ENCODE measurements at regions of chr12 and their contacts with region 1.

Region 1: DNA sequence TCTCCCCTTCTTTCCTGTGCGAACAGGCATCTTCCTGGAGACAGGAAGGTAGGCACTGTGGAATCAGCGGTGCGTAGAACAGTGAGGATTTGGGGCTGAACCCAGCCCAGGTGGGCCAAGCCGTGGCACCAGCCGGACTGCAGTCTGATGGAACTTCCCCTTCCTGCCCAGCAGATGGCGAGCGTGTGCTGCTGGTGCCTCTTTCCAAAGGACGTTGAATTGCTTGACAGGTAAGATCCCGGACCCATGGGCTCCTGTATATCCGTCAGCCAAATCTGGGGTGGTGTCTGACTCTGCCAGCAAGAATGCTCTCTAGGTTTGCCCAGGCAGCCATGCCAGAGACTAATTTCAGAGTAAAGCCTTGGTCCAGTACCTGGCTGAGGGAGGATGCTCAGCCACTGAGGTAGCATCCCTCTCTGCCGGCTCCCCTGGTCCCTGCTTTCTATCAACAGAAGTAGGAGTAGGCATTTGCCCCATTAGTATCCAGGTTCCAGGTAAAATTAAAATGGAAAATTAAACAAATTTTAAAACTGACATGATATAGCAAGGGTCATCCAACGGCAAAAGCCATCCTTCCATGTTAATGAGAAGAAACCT is 21.1 kb upstream of the KCNA5 start:
- DNase-seq: peak; percentile 84
- CTCF ChIP-seq: peak; percentile 95

Region 2: DNA sequence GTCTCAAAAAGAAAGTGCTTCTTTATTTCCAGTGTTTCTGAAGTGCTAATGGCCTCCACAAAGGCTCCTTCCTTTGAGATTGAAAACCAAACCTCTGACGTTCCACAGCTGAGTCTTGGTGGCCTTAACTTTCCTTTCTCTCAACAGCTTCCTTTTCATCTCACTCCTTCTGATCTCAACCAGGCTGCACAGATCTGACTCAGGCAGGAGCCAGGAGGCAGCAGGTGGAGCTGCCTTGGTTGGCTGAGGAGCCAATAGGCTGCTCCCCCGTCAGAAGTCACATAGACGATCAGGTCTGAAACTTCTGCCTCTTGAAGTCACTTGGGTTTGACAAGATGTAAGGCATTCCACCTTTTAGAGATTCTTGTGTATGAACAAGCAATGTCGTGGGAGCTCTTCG is 12.0 kb after region 1 on chr12:
- CTCF ChIA-PET with region 1: interaction called, 14 read pairs
- POLR2A ChIA-PET with region 1: interaction called, 6 read pairs
- DNase-seq: no peak
- CTCF ChIP-seq: no peak

Region 3: GRCh38 chr12:5059358-5059757 is 36.8 kb after region 1 on chr12:
- CTCF ChIA-PET with region 1: interaction called, 19 read pairs
- POLR2A ChIA-PET with region 1: no interaction called
- DNase-seq: peak; percentile 41
- CTCF ChIP-seq: no peak

Region 4: DNA sequence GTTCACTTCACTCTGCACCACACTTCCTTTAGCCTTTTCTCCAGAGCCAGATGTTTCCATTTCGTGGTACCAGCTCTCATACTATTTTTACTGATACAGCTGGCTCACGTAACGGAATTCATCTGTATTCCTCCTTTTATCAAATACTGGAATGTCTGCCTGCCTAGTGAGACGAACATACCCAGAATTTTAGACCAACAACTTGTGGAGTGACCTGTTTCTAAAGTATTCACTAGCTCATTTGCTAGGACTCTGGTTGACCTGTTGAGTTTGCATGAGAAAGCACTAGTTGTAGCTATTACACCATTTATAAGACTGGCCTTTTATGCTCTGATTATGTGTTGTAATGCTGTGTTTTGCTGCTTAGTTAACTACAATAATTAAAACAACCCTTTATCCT is 43.7 kb after region 1 on chr12:
- CTCF ChIA-PET with region 1: interaction called, 15 read pairs
- POLR2A ChIA-PET with region 1: no interaction called
- DNase-seq: no peak
- CTCF ChIP-seq: no peak

Region 5: DNA sequence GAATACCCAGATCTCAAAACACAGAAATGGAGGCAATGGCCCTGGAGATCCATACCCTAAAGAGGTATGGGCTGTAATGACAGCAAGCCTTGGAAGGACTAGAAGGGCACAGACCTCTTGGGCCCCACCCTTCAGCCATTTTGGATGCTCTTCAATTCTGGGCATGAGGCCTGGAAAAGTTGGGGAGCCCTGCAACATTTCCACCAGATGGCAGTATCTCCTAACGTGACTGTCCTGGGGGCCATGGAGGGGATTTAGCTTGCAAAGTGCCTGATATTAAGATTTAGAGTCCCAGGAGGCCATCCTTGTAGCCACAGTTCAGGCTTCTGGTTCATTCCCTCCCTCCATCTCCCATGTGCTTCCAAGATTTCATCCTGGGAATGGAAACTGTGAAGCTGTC is 51.3 kb after region 1 on chr12:
- CTCF ChIA-PET with region 1: interaction called, 15 read pairs
- POLR2A ChIA-PET with region 1: no interaction called
- DNase-seq: no peak
- CTCF ChIP-seq: no peak

Region 6: GRCh38 chr12:5083955-5084849 is 61.6 kb after region 1 on chr12:
- CTCF ChIA-PET with region 1: interaction called, 258 read pairs
- POLR2A ChIA-PET with region 1: no interaction called
- DNase-seq: peak; percentile 73
- CTCF ChIP-seq: peak; percentile 75

Region 7: DNA sequence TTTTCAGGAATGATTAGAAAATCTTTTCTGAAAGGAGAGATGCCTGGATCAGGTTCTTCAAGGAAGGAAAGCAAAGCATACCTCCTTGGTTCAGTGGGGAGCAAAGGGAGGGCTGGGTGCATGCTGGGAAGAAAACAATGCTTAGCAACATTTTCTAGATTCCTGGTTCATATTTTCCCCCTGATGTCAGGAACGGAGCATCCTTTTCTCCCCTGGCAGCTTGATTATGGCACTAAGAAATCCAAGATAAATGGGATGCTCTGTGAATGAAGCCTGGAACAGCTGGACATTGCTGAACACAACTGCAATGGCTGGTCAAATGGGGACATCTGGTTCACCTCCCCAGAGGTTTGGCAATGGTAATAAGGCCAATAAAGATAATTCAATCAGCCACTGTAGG is 72.0 kb after region 1 on chr12:
- CTCF ChIA-PET with region 1: interaction called, 258 read pairs
- POLR2A ChIA-PET with region 1: no interaction called
- DNase-seq: no peak
- CTCF ChIP-seq: no peak

Measured in GM10248 (cell line).